ENCODE measurements at regions of chr6 and their contacts with region 1.

Region 1: DNA sequence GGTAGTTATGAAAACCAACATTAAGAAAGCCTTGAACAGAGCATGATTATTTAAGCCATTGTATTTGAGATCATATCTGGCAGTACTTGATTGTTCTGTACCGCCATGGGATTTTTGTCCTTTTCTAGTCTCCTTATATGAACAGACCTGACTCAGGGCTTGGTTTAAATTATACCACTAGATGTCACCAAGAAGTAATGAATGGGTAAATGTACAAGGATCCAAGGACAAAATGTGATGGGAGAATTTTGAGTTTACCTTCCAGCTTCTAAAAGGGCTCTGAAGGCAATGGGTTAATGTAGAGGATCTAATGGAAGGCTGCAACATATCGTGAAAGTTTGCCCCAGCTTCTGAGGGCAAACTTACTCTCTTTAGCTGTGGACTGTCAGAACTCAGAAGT is 12.0 kb downstream of the RNF8 start:
- DNase-seq: no peak
- ATAC-seq: no peak
- H3K4me3 Mint-ChIP-seq: no peak overlapping the region
- H3K27ac Mint-ChIP-seq: no peak overlapping the region
- H3K4me1 Mint-ChIP-seq: peaks cover 14% of the 10 kb centered on the region
- H3K27me3 Mint-ChIP-seq: no peaks in the 10 kb centered on the region

Region 2: GRCh38 chr6:37381579-37381978 is 15.8 kb after region 1 on chr6:
- CTCF ChIA-PET with region 1: interaction called, 23 read pairs
- DNase-seq: peak; percentile 47
- ATAC-seq: peak; percentile 76
- H3K4me3 Mint-ChIP-seq: no peak overlapping the region
- H3K27ac Mint-ChIP-seq: peak overlapping the region; percentile 10
- H3K4me1 Mint-ChIP-seq: no peaks in the 10 kb centered on the region
- H3K27me3 Mint-ChIP-seq: no peaks in the 10 kb centered on the region